ENCODE measurements at regions of chr20 and their contacts with region 1.

Region 1: GRCh38 chr20:2873010-2873746 is at the start of gene PTPRA:
- DNase-seq: peak; percentile 88 to 90
- ATAC-seq: peak; percentile 96 to 97
- H3K4me3 ChIP-seq: peak within 1 kb of the TSS; percentile 74 to 99 (median 90)
- H3K27ac ChIP-seq: peak within 1 kb of the TSS; percentile 71 to 85 (median 74)
- H3K4me1 ChIP-seq: peaks cover 18 to 21% of the 10 kb centered on the region in 2 donors
- H3K27me3 ChIP-seq: no peaks in the 10 kb centered on the region
- CTCF ChIP-seq: no peak
- POLR2A ChIP-seq: peak; percentile 87 to 89
- total RNA-seq, gene PTPRA: 18.9 to 32.5 (median 27.3) TPM

Region 2: DNA sequence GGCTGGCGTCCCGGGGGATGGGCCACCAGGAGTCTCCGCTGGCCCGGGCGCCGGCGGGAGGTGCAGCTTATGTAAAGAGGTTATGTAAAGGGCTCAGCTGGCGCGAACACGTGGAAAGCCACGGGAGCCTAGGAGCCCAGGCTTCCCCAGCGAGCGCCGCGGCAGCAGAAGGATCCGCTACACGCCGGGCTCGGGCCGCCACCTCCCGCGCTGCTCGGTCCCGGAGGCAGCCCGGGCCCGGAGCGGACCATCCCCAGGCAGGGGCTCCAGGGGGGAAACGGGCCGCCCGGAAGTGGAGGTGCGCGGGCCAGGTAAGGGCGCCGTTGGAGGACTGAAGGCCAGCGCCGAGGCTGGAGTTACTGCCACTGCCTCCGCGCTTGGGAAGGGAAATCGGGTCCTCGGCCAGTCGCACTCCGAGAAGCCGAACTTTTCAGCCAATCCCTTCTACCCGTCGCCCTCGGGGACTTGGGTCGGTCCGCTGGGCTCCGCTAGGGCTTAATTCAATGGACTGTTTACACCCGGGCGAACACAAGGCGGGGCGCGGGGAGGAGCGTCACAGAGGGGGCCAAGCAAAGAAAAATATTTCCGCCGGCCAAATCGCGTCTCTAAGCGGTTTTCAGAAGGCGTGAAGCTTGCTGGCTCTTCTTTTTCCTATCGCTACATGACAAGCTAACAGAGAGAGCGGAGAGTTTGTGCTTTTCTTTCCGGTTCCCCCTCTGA is 771.2 kb before region 1 on chr20:
- in situ Hi-C with region 1: no loop called
- intact Hi-C with region 1: no loop called
- DNase-seq: peak; percentile 88 to 91
- ATAC-seq: peak; percentile 88 to 89
- H3K4me3 ChIP-seq: peak overlapping the region; percentile 72 to 92 (median 90)
- H3K27ac ChIP-seq: peak overlapping the region; percentile 94 to 99 (median 96)
- H3K4me1 ChIP-seq: peaks cover 40 to 42% of the 10 kb centered on the region in 2 donors
- H3K27me3 ChIP-seq: no peaks in the 10 kb centered on the region
- CTCF ChIP-seq: no peak
- POLR2A ChIP-seq: peak; percentile 53 to 54

Region 3: GRCh38 chr20:2651772-2652723 is 221.1 kb before region 1 on chr20 and contains the start of gene NOP56:
- in situ Hi-C with region 1: loop called in 1 of 4 experiments (anchors 25 kb)
- intact Hi-C with region 1: loop called (anchors 10 kb)
- DNase-seq: peak; percentile 81 to 85
- ATAC-seq: peak; percentile 90 to 92
- H3K4me3 ChIP-seq: peak within 1 kb of the TSS; percentile 84 to 96 (median 90)
- H3K27ac ChIP-seq: peak within 1 kb of the TSS; percentile 91 to 97 (median 94)
- H3K4me1 ChIP-seq: peaks cover 17 to 21% of the 10 kb centered on the region in 2 donors
- H3K27me3 ChIP-seq: no peaks in the 10 kb centered on the region
- CTCF ChIP-seq: no peak
- POLR2A ChIP-seq: peak; percentile 84 to 95
- total RNA-seq, gene NOP56: 40.7 to 71.0 (median 54.9) TPM

Region 4: GRCh38 chr20:2840138-2840966 is 32.8 kb before region 1 on chr20 and contains the starts of genes PCED1A and VPS16:
- in situ Hi-C with region 1: no loop called
- intact Hi-C with region 1: loop called (anchors 1 kb)
- DNase-seq: peak; percentile 71 to 82
- ATAC-seq: peak; percentile 95 to 97
- H3K4me3 ChIP-seq: peak within 1 kb of the TSS; percentile 88 to 98 (median 90)
- H3K27ac ChIP-seq: peak within 1 kb of the TSS; percentile 83 to 97 (median 94)
- H3K4me1 ChIP-seq: peaks cover 16 to 23% of the 10 kb centered on the region in 2 donors
- H3K27me3 ChIP-seq: no peaks in the 10 kb centered on the region
- CTCF ChIP-seq: no peak
- POLR2A ChIP-seq: peak; percentile 42 to 60
- total RNA-seq, gene PCED1A: 2.6 to 9.3 (median 5.7) TPM
- total RNA-seq, gene VPS16: 17.3 to 26.4 (median 21.6) TPM

Region 5: GRCh38 chr20:2955257-2955970 is 82.2 kb after region 1 on chr20:
- in situ Hi-C with region 1: no loop called
- intact Hi-C with region 1: no loop called
- DNase-seq: peak in 1 of 2 donors; percentile 23
- ATAC-seq: peak; percentile 75 to 80
- H3K4me3 ChIP-seq: no peak overlapping the region
- H3K27ac ChIP-seq: peak overlapping the region in 2 of 4 donors; percentile 2 to 60
- H3K4me1 ChIP-seq: peaks cover 9 to 12% of the 10 kb centered on the region in 2 donors
- H3K27me3 ChIP-seq: no peaks in the 10 kb centered on the region
- CTCF ChIP-seq: no peak
- POLR2A ChIP-seq: no peak

Region 6: GRCh38 chr20:3000852-3001523 is 127.8 kb after region 1 on chr20:
- in situ Hi-C with region 1: no loop called
- intact Hi-C with region 1: loop called (anchors 2 kb)
- DNase-seq: no peak
- ATAC-seq: peak in 1 of 2 donors; percentile 55
- H3K4me3 ChIP-seq: no peak overlapping the region
- H3K27ac ChIP-seq: no peak overlapping the region
- H3K4me1 ChIP-seq: no peaks in the 10 kb centered on the region
- H3K27me3 ChIP-seq: no peaks in the 10 kb centered on the region
- CTCF ChIP-seq: peak in 4 of 5 experiments; percentile 30 to 48 (median 40)
- POLR2A ChIP-seq: no peak

Region 7: GRCh38 chr20:3407771-3408637 is 534.8 kb after region 1 on chr20:
- in situ Hi-C with region 1: no loop called
- intact Hi-C with region 1: loop called (anchors 5 kb)
- DNase-seq: peak; percentile 28 to 54
- ATAC-seq: peak; percentile 67 to 74
- H3K4me3 ChIP-seq: peak overlapping the region; percentile 68 to 86 (median 78)
- H3K27ac ChIP-seq: peak overlapping the region; percentile 81 to 89 (median 83)
- H3K4me1 ChIP-seq: peaks cover 4 to 11% of the 10 kb centered on the region in 2 donors
- H3K27me3 ChIP-seq: no peaks in the 10 kb centered on the region
- CTCF ChIP-seq: no peak
- POLR2A ChIP-seq: peak; percentile 32 to 44

Measured in gastrocnemius medialis (tissue), 4 donors.